ENCODE measurements at regions of chr12 and their contacts with region 1.

Region 1: GRCh38 chr12:100554608-100555077 is 18.8 kb upstream of the GAS2L3 start:
- DNase-seq: peak in 1 of 2 donors; percentile 92
- H3K4me3 ChIP-seq: no peak overlapping the region
- H3K27ac ChIP-seq: no peak overlapping the region
- H3K4me1 ChIP-seq: peaks cover 0 to 5% (median 2%) of the 10 kb centered on the region in 4 donors
- H3K27me3 ChIP-seq: no peaks in the 10 kb centered on the region
- CTCF ChIP-seq: peak in 6 of 7 experiments; percentile 53 to 96 (median 84)
- EP300 ChIP-seq: no peak
- POLR2A ChIP-seq: no peak

Region 2: DNA sequence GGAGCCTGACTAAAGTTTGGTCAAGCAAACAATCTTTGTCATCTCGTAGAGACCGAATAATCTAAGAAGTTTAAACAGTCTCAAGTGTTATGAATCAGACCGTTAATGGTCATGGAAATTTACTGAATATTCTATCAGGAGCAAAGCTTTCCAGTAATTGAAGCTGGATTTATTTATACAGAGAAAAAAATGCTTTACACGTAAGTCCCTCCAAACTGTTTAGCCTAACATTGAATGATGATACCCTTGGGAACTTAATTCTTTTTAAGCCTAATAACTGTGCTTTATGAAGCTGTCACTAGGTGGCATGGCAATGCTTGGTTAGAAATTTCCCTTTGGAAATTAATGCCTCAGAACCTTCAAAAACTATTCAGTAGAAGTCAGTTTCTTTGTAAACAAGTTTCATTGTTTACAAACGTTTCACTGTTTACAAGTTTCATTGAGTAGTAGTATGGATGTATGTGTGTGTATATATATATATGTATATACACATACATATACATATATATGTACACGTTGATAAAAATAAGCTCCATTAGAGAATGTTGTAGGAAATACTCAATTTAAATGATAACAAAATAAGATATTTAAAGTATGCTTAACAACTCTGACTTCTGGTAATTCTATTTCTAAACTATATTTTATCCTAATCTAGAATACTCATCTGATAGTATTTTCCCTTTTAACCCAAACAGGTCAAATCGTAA is 319.9 kb before region 1 on chr12:
- intact Hi-C with region 1: loop called (anchors 5 kb)
- DNase-seq: peak in 1 of 2 donors; percentile 76
- H3K4me3 ChIP-seq: no peak overlapping the region
- H3K27ac ChIP-seq: peak overlapping the region in 3 of 5 donors; percentile 1 to 62 (median 36)
- H3K4me1 ChIP-seq: peaks cover 0 to 8% (median 3%) of the 10 kb centered on the region in 4 donors
- H3K27me3 ChIP-seq: no peaks in the 10 kb centered on the region
- CTCF ChIP-seq: peak in 5 of 7 experiments; percentile 20 to 70 (median 56)
- EP300 ChIP-seq: no peak
- POLR2A ChIP-seq: no peak

Measured in stomach (tissue), 19 donors.